ENCODE measurements at regions of chr2 and their contacts with region 1.

Region 1: GRCh38 chr2:43226558-43226954 is at the start of gene ZFP36L2:
- DNase-seq: peak; percentile 90 to 99 (median 97)
- ATAC-seq: peak; percentile 84
- H3K4me3 ChIP-seq: peak within 1 kb of the TSS; percentile 87
- H3K4me3 Mint-ChIP-seq: peak within 1 kb of the TSS; percentile 85 to 99 (median 96)
- H3K27ac ChIP-seq: peak within 1 kb of the TSS; percentile 97
- H3K27ac Mint-ChIP-seq: peak within 1 kb of the TSS; percentile 87 to 99 (median 96)
- H3K4me1 ChIP-seq: peaks cover 22% of the 10 kb centered on the region in 2 donors
- H3K4me1 Mint-ChIP-seq: peaks cover 22 to 35% (median 25%) of the 10 kb centered on the region in 7 donors
- H3K27me3 ChIP-seq: no peaks in the 10 kb centered on the region
- H3K27me3 Mint-ChIP-seq: peaks cover 0 to 4% (median 0%) of the 10 kb centered on the region in 5 donors
- total RNA-seq, gene ZFP36L2: 231 to 747 (median 389) TPM

Region 2: GRCh38 chr2:42663106-42663780 is 563.3 kb before region 1 on chr2:
- CTCF ChIA-PET with region 1: no interaction called
- POLR2A ChIA-PET with region 1: no interaction called
- intact Hi-C with region 1: loop called in 1 of 2 experiments (anchors 10 kb)
- DNase-seq: peak; percentile 26 to 85 (median 75)
- ATAC-seq: peak; percentile 96
- H3K4me3 ChIP-seq: no peak overlapping the region
- H3K4me3 Mint-ChIP-seq: peak overlapping the region in 7 of 10 donors; percentile 31 to 69 (median 53)
- H3K27ac ChIP-seq: peak overlapping the region; percentile 43
- H3K27ac Mint-ChIP-seq: peak overlapping the region in 8 of 9 donors; percentile 29 to 95 (median 83)
- H3K4me1 ChIP-seq: peaks cover 0 to 5% of the 10 kb centered on the region in 2 donors
- H3K4me1 Mint-ChIP-seq: peaks cover 8 to 60% (median 25%) of the 10 kb centered on the region in 7 donors
- H3K27me3 ChIP-seq: no peaks in the 10 kb centered on the region
- H3K27me3 Mint-ChIP-seq: no peaks in the 10 kb centered on the region

Region 3: GRCh38 chr2:42944779-42945415 is 281.7 kb before region 1 on chr2:
- CTCF ChIA-PET with region 1: interaction called, 37 read pairs
- POLR2A ChIA-PET with region 1: interaction called, 10 read pairs
- intact Hi-C with region 1: loop called (anchors 1 kb)
- DNase-seq: no peak
- ATAC-seq: no peak
- H3K4me3 ChIP-seq: no peak overlapping the region
- H3K4me3 Mint-ChIP-seq: no peak overlapping the region
- H3K27ac ChIP-seq: no peak overlapping the region
- H3K27ac Mint-ChIP-seq: no peak overlapping the region
- H3K4me1 ChIP-seq: no peaks in the 10 kb centered on the region
- H3K4me1 Mint-ChIP-seq: peaks cover 0 to 7% (median 5%) of the 10 kb centered on the region in 7 donors
- H3K27me3 ChIP-seq: no peaks in the 10 kb centered on the region
- H3K27me3 Mint-ChIP-seq: peaks cover 0 to 8% (median 0%) of the 10 kb centered on the region in 5 donors

Region 4: DNA sequence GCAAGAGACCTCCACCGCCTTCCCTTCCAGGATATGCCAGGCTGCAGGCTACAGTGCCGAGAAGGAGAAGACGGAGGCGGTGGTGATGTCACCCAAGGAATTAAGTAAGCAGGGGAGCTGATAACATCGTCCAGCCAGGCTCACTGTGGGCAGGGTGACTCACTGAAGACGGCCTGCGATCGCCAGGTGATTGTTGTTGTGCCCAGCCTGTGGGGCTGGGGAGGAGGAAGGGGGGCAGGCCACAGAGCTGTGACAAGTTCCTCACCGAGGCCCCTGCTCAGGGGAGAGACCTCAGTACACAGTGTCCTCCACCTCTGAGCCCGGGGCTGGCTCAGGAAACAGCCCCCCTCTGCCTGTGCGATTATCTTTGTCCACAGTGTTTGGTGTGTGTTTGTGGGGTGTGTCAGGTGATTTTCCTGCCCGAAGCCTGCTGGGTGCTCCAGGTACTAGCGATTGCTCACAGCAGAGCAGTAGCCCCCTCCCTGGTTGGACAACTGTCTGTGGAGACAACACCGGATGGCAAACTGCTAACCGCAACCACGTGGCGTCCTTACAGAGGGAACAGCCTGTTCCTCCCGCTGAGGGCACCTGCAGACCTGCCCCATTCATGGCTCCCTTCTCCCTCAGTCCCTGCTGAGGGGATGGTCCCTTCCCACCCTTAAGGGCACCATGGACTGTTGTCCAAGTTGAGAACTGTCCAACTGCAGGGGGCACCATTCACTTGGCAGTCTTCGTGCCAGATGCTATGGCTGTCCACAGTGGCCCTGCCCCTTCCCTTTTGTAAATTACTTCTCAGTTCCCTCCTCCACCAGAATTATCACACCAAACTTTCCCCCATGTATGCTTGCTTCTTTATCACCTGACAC is 95.3 kb before region 1 on chr2:
- CTCF ChIA-PET with region 1: interaction called, 203 read pairs
- POLR2A ChIA-PET with region 1: interaction called, 1,771 read pairs
- intact Hi-C with region 1: loop called (anchors 1 kb)
- DNase-seq: peak; percentile 44 to 92 (median 82)
- ATAC-seq: peak; percentile 60
- H3K4me3 ChIP-seq: peak overlapping the region; percentile 51
- H3K4me3 Mint-ChIP-seq: peak overlapping the region; percentile 36 to 86 (median 68)
- H3K27ac ChIP-seq: peak overlapping the region; percentile 96
- H3K27ac Mint-ChIP-seq: peak overlapping the region; percentile 88 to 100 (median 98)
- H3K4me1 ChIP-seq: peaks cover 90 to 92% of the 10 kb centered on the region in 2 donors
- H3K4me1 Mint-ChIP-seq: peaks cover 67 to 89% (median 85%) of the 10 kb centered on the region in 7 donors
- H3K27me3 ChIP-seq: no peaks in the 10 kb centered on the region
- H3K27me3 Mint-ChIP-seq: no peaks in the 10 kb centered on the region

Region 5: DNA sequence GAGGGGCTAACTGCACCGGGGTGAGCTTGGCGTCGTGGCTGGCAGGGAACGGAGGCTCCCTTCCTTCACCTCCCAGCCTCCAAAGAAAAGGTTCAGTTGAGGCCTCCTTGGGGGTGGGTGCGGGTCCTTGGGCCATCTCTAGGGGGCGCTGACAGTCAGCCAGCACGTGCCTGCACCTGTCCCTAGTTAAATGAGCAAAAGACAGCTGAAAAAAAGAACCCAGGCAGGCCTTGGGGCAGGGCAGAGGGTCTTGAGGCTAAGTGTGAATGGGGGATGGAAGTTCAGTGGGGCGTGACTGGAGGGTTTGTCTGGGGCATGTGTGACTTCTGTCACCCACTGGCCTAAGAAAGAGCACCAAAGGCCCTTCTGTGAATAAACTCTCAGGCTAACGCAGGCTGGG is 56.6 kb before region 1 on chr2:
- CTCF ChIA-PET with region 1: interaction called, 210 read pairs
- POLR2A ChIA-PET with region 1: interaction called, 1,899 read pairs
- intact Hi-C with region 1: loop called (anchors 1 kb)
- DNase-seq: peak in 8 of 9 donors; percentile 51 to 74 (median 64)
- ATAC-seq: peak; percentile 26
- H3K4me3 ChIP-seq: peak overlapping the region; percentile 35
- H3K4me3 Mint-ChIP-seq: peak overlapping the region; percentile 68 to 91 (median 84)
- H3K27ac ChIP-seq: peak overlapping the region; percentile 99
- H3K27ac Mint-ChIP-seq: peak overlapping the region; percentile 94 to 100 (median 98)
- H3K4me1 ChIP-seq: peaks cover 64 to 70% of the 10 kb centered on the region in 2 donors
- H3K4me1 Mint-ChIP-seq: peaks cover 52 to 89% (median 76%) of the 10 kb centered on the region in 7 donors
- H3K27me3 ChIP-seq: no peaks in the 10 kb centered on the region
- H3K27me3 Mint-ChIP-seq: no peaks in the 10 kb centered on the region

Region 6: GRCh38 chr2:43484323-43484930 is 257.9 kb after region 1 on chr2:
- CTCF ChIA-PET with region 1: interaction called, 15 read pairs
- POLR2A ChIA-PET with region 1: interaction called, 3 read pairs
- intact Hi-C with region 1: loop called (anchors 1 kb)
- DNase-seq: peak in 7 of 9 donors; percentile 15 to 56 (median 47)
- ATAC-seq: peak; percentile 58
- H3K4me3 ChIP-seq: no peak overlapping the region
- H3K4me3 Mint-ChIP-seq: no peak overlapping the region
- H3K27ac ChIP-seq: no peak overlapping the region
- H3K27ac Mint-ChIP-seq: no peak overlapping the region
- H3K4me1 ChIP-seq: peaks cover 0 to 21% of the 10 kb centered on the region in 2 donors
- H3K4me1 Mint-ChIP-seq: peaks cover 0 to 15% (median 0%) of the 10 kb centered on the region in 7 donors
- H3K27me3 ChIP-seq: no peaks in the 10 kb centered on the region
- H3K27me3 Mint-ChIP-seq: no peaks in the 10 kb centered on the region

Measured in naive thymus-derived CD4-positive, alpha-beta T cell (primary cell).